OCI-LY7 (cell line): ENCODE measurements at regions of chr2 and their contacts with region 1.

Region 1: GRCh38 chr2:68251187-68251854 is 1.0 kb downstream of the PPP3R1 start:
- DNase-seq: peak; percentile 92
- H3K4me3 ChIP-seq: peak overlapping the region; percentile 89
- H3K27ac ChIP-seq: peak overlapping the region; percentile 89
- H3K4me1 ChIP-seq: peaks cover 63% of the 10 kb centered on the region
- CTCF ChIP-seq: peak; percentile 88

Region 2: DNA sequence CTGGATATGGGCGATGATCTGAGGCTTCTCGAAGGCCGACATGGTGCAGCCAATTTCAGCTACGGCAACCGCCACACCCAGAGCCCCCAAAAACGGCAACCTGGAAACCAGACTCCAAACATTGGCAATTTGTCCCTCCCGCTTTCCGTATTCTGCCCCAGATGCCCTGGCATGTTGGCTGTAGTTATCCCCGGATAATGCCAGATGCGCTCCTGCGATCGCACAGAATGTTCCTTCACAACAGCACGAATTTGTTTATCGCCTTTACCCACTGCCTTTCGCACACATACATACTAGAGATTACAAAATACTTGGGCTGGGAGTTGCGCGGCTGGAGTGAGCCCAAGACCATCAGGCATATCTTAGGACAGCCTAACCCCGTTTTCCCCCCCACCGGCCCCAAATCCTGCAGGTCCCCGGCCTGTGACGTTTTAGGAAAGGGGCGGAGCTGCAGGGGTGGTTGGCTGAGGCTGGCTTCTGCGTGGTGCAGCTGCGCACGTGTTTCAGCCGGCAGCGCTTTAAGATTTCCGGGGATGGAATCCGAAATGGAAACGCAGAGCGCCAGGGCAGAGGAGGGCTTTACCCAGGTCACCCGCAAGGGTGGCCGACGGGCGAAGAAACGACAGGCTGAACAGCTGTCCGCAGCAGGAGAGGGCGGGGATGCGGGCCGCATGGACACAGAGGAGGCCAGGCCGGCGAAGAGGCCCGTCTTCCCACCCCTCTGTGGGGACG is 93.8 kb before region 1 on chr2 and contains the start of gene PNO1:
- CTCF ChIA-PET with region 1: no interaction called
- POLR2A ChIA-PET with region 1: interaction called, 4 read pairs
- intact Hi-C with region 1: loop called (anchors 1 kb)
- DNase-seq: peak; percentile 96
- H3K4me3 ChIP-seq: peak within 1 kb of the TSS; percentile 100
- H3K27ac ChIP-seq: peak within 1 kb of the TSS; percentile 76
- H3K4me1 ChIP-seq: peaks cover 28% of the 10 kb centered on the region
- CTCF ChIP-seq: no peak
- total RNA-seq, gene PNO1: 18.6 and 26.3 TPM in 2 replicates

Region 3: GRCh38 chr2:68196120-68196716 is 55.1 kb before region 1 on chr2:
- CTCF ChIA-PET with region 1: no interaction called
- POLR2A ChIA-PET with region 1: interaction called, 3 read pairs
- intact Hi-C with region 1: loop called (anchors 1 kb)
- DNase-seq: peak; percentile 66
- H3K4me3 ChIP-seq: no peak overlapping the region
- H3K27ac ChIP-seq: no peak overlapping the region
- H3K4me1 ChIP-seq: peaks cover 30% of the 10 kb centered on the region
- CTCF ChIP-seq: peak; percentile 89

Region 4: DNA sequence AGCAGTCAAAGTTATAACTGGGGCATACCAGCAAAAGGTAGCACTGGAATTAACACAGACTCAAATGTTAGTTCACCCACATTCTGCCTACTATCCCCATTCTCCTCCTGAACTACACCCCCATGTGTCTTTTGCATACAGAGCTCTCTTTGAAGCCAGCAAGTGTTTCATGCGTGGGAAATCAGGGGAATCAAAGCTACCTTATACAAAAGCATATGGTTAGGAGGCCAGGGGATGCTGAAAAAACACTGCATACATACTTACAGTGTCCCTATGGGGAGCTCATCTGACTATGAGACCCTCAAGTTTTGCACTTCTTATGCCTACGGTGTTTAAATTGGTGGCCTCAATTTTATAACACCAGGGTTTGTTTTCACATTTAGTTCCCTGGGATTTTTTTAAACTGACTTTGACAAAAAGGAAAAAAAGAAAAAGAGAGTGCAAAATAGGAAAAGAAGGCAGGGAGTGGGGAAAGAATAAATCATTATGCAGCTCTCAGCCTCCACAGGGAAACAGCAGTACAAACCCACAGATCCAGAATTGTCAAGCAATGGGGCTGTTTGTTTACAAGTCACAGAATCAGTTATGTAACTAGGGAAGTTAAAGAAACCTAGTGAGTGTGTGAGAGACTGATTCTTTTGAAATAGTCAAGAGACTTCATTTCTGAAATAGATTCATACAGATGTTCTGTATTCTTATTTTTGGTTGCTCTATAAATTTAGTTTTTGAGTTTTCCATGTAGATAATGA is 21.1 kb after region 1 on chr2:
- CTCF ChIA-PET with region 1: no interaction called
- POLR2A ChIA-PET with region 1: interaction called, 15 read pairs
- intact Hi-C with region 1: loop called (anchors 2 kb)
- DNase-seq: no peak
- H3K4me3 ChIP-seq: no peak overlapping the region
- H3K27ac ChIP-seq: no peak overlapping the region
- H3K4me1 ChIP-seq: peaks cover 29% of the 10 kb centered on the region
- CTCF ChIP-seq: no peak

Region 5: DNA sequence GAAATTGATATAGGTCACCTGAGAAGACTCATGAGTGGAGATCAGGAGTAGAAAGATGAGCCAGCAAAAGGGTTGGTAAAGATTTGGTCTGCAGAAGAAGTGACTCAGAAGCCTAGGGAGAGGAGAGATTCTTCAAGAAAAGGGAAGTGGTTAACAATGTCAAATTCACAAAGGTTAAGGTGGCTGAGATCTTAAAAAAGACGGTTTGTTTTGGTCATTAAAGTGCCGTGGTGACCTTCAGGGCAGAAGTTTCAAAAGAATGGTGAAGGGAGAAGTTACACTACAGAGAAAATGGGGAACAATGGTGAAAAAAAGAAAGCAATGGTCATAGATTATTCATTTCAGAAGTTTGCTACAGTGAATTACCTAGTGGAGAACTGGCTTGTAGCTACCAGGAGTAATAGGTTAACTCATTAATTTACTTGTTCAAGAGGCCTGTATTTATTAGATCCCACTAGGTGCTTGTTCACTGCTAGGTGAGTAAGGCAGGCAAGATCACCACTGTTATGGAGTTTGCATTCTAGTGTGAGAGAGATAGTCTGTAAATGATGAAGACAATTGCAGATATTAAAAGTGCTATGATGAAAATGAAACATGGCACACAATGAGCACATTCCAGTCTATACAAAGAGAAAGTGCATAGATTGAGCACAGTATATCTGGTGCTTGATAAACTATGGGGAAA is 172.8 kb after region 1 on chr2:
- CTCF ChIA-PET with region 1: no interaction called
- POLR2A ChIA-PET with region 1: no interaction called
- intact Hi-C with region 1: loop called (anchors 5 kb)
- DNase-seq: peak; percentile 81
- H3K4me3 ChIP-seq: peak overlapping the region; percentile 39
- H3K27ac ChIP-seq: peak overlapping the region; percentile 88
- H3K4me1 ChIP-seq: peaks cover 90% of the 10 kb centered on the region
- CTCF ChIP-seq: no peak